Gastrocnemius medialis (tissue), 4 donors: ENCODE measurements at regions of chr9 and their contacts with region 1.

Region 1: DNA sequence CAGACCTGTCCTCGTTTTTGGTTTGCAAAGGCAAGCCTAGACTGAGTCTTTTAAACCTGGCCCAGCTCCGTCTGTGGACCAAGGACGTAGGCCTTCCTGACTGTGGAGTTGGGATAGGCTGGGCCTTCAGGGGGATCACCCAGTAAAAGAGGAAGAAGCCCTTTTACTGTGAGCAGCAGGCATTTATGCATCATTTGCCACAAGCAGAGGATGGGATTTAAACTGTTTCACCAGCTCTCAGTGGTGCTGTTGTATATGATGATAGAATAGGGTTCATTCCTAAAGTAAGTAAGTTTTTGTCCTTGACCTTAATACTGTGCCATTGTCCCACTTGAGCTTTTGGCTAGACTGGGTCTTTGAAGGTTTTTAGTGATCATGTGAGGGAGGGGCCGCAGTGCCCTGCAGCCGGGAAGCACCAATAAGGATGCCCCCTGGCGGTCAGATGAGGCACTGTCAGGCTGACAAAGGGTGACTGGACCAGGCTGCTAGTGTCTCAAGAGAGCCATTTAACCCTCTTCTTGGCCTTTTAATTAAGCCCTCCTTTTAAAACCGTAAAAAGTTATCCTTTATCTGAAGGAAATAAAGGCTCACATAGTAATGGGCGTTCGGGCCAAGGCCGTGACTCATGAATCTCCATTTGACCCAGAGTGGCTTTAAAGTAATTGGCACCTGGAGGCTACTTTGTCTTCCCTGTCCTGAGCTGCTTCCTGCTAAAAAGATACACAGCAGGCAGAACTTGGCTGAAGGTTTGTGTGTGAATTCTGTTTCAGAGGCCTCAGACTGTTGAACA is 74.0 kb downstream of the UBAP1 start:
- DNase-seq: peak in 1 of 2 donors; percentile 71
- ATAC-seq: peak; percentile 15 to 20
- H3K4me3 ChIP-seq: no peak overlapping the region
- H3K27ac ChIP-seq: peak overlapping the region; percentile 86 to 98 (median 90)
- H3K4me1 ChIP-seq: peaks cover 54 to 71% of the 10 kb centered on the region in 2 donors
- H3K27me3 ChIP-seq: no peaks in the 10 kb centered on the region
- CTCF ChIP-seq: peak; percentile 81 to 97 (median 94)
- POLR2A ChIP-seq: no peak

Region 2: GRCh38 chr9:34084562-34084961 is 168.3 kb before region 1 on chr9:
- in situ Hi-C with region 1: no loop called
- intact Hi-C with region 1: loop called (anchors 2 kb)
- DNase-seq: peak; percentile 38 to 50
- ATAC-seq: peak; percentile 75 to 83
- H3K4me3 ChIP-seq: no peak overlapping the region
- H3K27ac ChIP-seq: peak overlapping the region; percentile 80 to 91 (median 89)
- H3K4me1 ChIP-seq: peaks cover 41 to 44% of the 10 kb centered on the region in 2 donors
- H3K27me3 ChIP-seq: no peaks in the 10 kb centered on the region
- CTCF ChIP-seq: no peak
- POLR2A ChIP-seq: no peak

Region 3: DNA sequence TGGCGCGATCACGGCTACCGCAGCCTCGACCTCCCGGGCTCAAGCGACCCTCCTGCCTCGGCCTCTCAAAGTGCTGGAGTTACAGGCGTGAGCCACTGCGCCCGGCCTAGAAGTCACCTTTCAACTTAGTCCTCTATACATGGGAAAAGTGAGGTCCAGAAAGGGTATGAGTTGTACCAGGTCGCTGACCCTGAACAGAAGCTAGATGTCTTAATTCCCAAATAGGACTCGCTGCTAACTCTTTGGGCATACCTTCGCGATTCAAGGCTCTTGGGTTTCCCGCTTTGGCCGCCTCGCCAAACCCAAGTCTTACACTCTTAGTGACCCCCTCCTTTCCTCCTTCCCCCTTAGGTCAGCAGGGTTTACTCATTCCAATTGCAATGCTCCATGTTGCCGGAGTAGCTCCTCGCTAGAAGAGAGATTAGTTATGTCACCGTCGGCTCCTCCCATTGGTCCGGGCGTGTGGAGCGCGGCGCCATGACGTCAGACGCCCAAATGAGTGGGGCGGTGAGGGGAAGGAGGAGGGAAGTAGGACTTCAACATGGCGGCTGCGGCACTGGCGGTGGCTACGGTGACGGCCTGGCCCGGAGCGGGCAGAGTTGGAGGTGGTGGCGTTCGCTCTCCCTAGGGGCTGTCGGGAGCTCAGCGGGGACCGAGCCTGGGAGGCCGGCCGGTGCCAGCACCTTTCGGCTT is 74.2 kb before region 1 on chr9 and contains the start of gene UBAP1:
- in situ Hi-C with region 1: no loop called
- intact Hi-C with region 1: loop called (anchors 1 kb)
- DNase-seq: peak; percentile 96 to 97
- ATAC-seq: peak; percentile 95 to 97
- H3K4me3 ChIP-seq: peak within 1 kb of the TSS; percentile 73 to 98 (median 90)
- H3K27ac ChIP-seq: peak within 1 kb of the TSS; percentile 93 to 99 (median 96)
- H3K4me1 ChIP-seq: peaks cover 9 to 17% of the 10 kb centered on the region in 2 donors
- H3K27me3 ChIP-seq: no peaks in the 10 kb centered on the region
- CTCF ChIP-seq: no peak
- POLR2A ChIP-seq: peak; percentile 90 to 97
- total RNA-seq, gene UBAP1: 69.5 to 162 (median 90.8) TPM

Region 4: GRCh38 chr9:34310205-34310604 is 57.3 kb after region 1 on chr9:
- in situ Hi-C with region 1: no loop called
- intact Hi-C with region 1: no loop called
- DNase-seq: no peak
- ATAC-seq: no peak
- H3K4me3 ChIP-seq: no peak overlapping the region
- H3K27ac ChIP-seq: no peak overlapping the region
- H3K4me1 ChIP-seq: no peaks in the 10 kb centered on the region
- H3K27me3 ChIP-seq: no peaks in the 10 kb centered on the region
- CTCF ChIP-seq: no peak
- POLR2A ChIP-seq: no peak

Region 5: GRCh38 chr9:34343090-34343489 is 90.2 kb after region 1 on chr9:
- in situ Hi-C with region 1: no loop called
- intact Hi-C with region 1: no loop called
- DNase-seq: peak; percentile 48 to 90
- ATAC-seq: peak; percentile 69 to 81
- H3K4me3 ChIP-seq: peak overlapping the region in 1 of 4 donors; percentile 6
- H3K27ac ChIP-seq: peak overlapping the region; percentile 71 to 93 (median 80)
- H3K4me1 ChIP-seq: peaks cover 45 to 53% of the 10 kb centered on the region in 2 donors
- H3K27me3 ChIP-seq: no peaks in the 10 kb centered on the region
- CTCF ChIP-seq: no peak
- POLR2A ChIP-seq: no peak

Region 6: DNA sequence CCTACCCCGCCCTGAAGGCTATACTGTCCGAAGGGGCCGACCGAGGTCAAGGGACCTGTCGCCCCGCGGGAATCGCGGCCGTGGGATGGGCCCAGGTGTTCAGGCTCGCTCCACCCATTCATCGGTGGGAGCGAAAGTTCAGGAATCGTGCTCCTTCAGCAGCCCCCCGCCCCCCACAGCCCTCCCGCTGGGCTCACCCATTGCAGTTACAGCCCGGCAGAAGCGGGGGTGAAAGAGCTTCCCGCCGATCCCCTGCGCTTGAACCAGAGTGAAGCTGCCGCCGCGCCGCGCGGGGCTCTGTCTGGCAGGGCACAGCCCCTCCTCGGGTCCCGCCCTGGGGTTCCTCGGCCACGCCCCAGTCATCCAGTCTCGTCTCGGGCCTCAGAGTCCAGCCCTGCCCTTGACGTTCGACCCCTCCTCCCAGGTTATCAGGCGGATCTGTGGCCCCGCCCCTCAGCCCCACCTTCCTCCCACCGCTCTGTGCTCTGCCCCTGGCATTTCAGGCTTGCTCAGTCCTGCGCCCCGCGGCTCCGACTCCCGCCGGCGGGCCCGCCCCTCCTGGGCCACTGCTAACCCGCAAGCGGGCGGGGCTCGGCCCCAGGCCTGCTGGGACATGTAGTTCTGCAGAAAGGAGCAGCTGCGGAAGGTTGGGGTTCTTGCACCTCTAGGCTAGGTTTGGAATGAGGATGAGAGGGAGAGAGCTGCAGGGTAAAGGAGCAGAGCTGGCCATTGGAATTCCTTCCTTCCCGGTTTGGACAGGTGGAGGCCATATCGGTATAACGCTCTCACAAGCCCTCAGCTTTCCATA is 123.9 kb after region 1 on chr9 and contains the start of gene MYORG:
- in situ Hi-C with region 1: no loop called
- intact Hi-C with region 1: loop called (anchors 2 kb)
- DNase-seq: peak; percentile 95 to 98
- ATAC-seq: peak; percentile 64 to 66
- H3K4me3 ChIP-seq: peak within 1 kb of the TSS; percentile 72 to 85 (median 78)
- H3K27ac ChIP-seq: peak within 1 kb of the TSS; percentile 89 to 93 (median 92)
- H3K4me1 ChIP-seq: peaks cover 31 to 48% of the 10 kb centered on the region in 2 donors
- H3K27me3 ChIP-seq: no peaks in the 10 kb centered on the region
- CTCF ChIP-seq: peak in 1 of 5 experiments; percentile 4
- POLR2A ChIP-seq: peak; percentile 78 to 94
- total RNA-seq, gene MYORG: 8.6 to 149 (median 49.5) TPM

Region 7: GRCh38 chr9:34591248-34591916 is 338.5 kb after region 1 on chr9:
- in situ Hi-C with region 1: no loop called
- intact Hi-C with region 1: loop called (anchors 10 kb)
- DNase-seq: peak; percentile 84 to 87
- ATAC-seq: peak; percentile 37 to 42
- H3K4me3 ChIP-seq: peak overlapping the region; percentile 49 to 82 (median 68)
- H3K27ac ChIP-seq: peak overlapping the region; percentile 82 to 93 (median 86)
- H3K4me1 ChIP-seq: peaks cover 58 to 66% of the 10 kb centered on the region in 2 donors
- H3K27me3 ChIP-seq: no peaks in the 10 kb centered on the region
- CTCF ChIP-seq: peak; percentile 94 to 98 (median 97)
- POLR2A ChIP-seq: no peak